OCI-LY7 (cell line): ENCODE measurements at regions of chr11 and their contacts with region 1.

Region 1: GRCh38 chr11:95067039-95067840 is 521 bp downstream of the SRSF8 start:
- DNase-seq: peak; percentile 79
- H3K4me3 ChIP-seq: peak overlapping the region; percentile 87
- H3K27ac ChIP-seq: peak overlapping the region; percentile 77
- H3K4me1 ChIP-seq: peaks cover 13% of the 10 kb centered on the region
- CTCF ChIP-seq: peak; percentile 63

Region 2: DNA sequence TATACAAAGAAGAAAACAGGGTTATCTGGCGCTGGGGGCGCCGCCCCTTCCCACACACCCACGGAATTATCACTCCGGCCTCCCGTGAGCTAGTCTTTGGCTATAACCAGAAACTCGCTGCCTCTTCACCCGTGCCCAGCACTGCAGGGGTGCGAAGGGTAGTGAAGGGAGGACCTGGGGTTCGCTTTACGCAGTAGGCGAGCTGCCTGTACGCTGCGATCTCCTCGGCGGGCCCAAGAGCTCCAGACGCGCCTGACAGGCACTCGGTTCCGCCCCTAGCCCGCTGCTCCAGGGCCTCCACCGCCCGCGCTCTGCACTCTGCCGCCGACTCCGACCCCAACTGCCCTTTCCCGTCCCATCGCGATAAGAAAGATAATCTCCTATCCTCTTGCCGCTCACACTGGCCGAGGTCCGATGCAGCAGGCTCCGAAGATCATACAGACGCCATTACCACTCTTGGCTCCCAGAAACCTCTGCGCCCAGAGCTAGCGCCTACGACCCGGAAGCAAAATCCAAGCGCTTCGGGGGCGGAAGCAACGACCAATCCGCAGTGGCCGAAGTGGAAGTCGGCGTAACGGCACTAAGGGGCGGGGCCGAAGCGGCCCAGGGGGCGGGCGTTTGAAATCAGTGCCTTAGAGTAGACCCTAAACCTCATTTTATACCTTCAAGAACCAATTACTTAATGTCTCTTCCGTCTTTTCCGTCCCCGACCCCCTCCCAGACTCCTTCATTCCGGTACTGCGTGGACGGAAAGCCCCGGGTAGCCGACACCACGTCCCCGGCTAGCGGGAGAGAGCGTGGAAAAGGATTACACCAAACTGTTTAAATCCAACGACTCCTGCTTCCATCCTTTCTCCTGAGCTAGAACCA is 93.9 kb before region 1 on chr11 and contains the starts of genes CWC15 and KDM4D:
- CTCF ChIA-PET with region 1: interaction called, 4 read pairs
- POLR2A ChIA-PET with region 1: interaction called, 18 read pairs
- intact Hi-C with region 1: loop called (anchors 2 kb)
- DNase-seq: peak; percentile 95
- H3K4me3 ChIP-seq: peak within 1 kb of the TSS; percentile 94
- H3K27ac ChIP-seq: peak within 1 kb of the TSS; percentile 39
- H3K4me1 ChIP-seq: peaks cover 10% of the 10 kb centered on the region
- CTCF ChIP-seq: no peak
- total RNA-seq, gene CWC15: 42.5 and 52.3 TPM in 2 replicates
- total RNA-seq, gene KDM4D: 0.62 and 1.0 TPM in 2 replicates

Region 3: GRCh38 chr11:95095858-95096587 is 28.8 kb after region 1 on chr11:
- CTCF ChIA-PET with region 1: interaction called, 18 read pairs
- POLR2A ChIA-PET with region 1: interaction called, 68 read pairs
- intact Hi-C with region 1: no loop called
- DNase-seq: peak; percentile 75
- H3K4me3 ChIP-seq: peak overlapping the region; percentile 58
- H3K27ac ChIP-seq: peak overlapping the region; percentile 88
- H3K4me1 ChIP-seq: peaks cover 80% of the 10 kb centered on the region
- CTCF ChIP-seq: no peak

Region 4: DNA sequence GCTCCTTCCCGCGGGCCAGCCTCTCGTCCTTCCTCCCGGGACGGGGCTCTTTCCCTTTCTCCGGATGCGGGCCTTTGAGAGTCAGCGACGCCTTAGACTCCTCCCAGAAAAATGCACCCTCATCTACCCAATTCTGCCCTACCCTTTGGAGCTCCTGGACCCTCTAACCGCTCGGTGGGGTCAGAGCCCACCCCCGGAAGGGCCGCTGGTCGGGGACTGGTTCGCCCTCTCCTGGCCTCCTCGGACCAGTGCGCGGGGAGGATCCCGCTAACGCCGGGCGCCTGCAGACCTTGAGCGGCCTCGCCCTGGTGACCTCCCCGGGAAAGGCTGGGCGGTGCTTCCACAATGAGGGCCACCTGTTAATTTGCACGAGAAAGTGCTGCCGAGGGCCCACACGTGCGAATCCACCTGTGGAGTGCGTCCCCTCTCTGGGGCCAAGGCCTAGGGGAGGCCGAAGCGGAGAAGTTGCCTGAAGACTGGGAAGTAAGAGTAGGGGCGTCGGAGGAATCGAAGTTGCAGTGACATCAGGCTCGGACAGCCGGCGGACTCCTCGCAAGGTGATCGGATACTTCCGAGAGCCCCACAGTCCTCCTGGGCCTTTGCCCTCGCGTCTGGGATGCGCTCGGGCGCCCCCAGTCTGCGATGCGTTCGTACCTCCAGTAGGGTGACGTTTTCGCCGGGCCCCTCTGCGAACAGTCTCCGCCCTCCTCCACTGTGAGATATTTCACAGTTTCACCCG is 83.9 kb after region 1 on chr11:
- CTCF ChIA-PET with region 1: interaction called, 5 read pairs
- POLR2A ChIA-PET with region 1: interaction called, 9 read pairs
- intact Hi-C with region 1: loop called (anchors 1 kb)
- DNase-seq: peak; percentile 92
- H3K4me3 ChIP-seq: peak overlapping the region; percentile 33
- H3K27ac ChIP-seq: no peak overlapping the region
- H3K4me1 ChIP-seq: peaks cover 26% of the 10 kb centered on the region
- CTCF ChIP-seq: peak; percentile 79

Region 5: DNA sequence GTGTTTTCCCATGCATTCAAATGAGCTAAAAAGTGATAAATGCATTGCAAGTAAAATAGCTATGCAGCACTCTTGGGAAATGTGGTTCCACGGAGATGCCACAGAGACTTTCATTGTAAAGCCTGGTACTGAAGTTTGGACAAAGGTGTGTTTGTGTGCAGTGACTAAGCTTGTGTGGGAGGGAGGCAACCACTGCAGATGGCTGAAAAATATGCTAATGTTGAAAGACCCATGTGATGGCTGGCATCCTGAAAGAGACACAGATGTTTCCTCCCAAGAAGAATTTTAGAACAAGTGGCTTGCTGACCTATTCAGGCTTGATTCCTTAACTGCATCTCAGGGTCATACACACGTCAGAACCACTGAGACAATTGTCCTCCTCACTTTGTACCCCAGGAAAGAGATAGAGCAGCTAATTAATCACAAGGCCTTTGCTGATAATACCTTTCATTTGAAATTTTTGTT is 648.6 kb after region 1 on chr11:
- CTCF ChIA-PET with region 1: interaction called, 3 read pairs
- POLR2A ChIA-PET with region 1: interaction called, 3 read pairs
- intact Hi-C with region 1: loop called (anchors 5 kb)
- DNase-seq: peak; percentile 85
- H3K4me3 ChIP-seq: peak overlapping the region; percentile 49
- H3K27ac ChIP-seq: peak overlapping the region; percentile 78
- H3K4me1 ChIP-seq: peaks cover 59% of the 10 kb centered on the region
- CTCF ChIP-seq: no peak

Region 6: GRCh38 chr11:95790123-95790932 is 723.1 kb after region 1 on chr11 and contains the start of gene CEP57:
- CTCF ChIA-PET with region 1: interaction called, 5 read pairs
- POLR2A ChIA-PET with region 1: interaction called, 12 read pairs
- intact Hi-C with region 1: loop called (anchors 5 kb)
- DNase-seq: peak; percentile 98
- H3K4me3 ChIP-seq: peak within 1 kb of the TSS; percentile 83
- H3K27ac ChIP-seq: peak within 1 kb of the TSS; percentile 94
- H3K4me1 ChIP-seq: peaks cover 28% of the 10 kb centered on the region
- CTCF ChIP-seq: no peak
- total RNA-seq, gene CEP57: 53.5 and 57.7 TPM in 2 replicates